ENCODE measurements at regions of chr19 and their contacts with region 1.

Region 1: DNA sequence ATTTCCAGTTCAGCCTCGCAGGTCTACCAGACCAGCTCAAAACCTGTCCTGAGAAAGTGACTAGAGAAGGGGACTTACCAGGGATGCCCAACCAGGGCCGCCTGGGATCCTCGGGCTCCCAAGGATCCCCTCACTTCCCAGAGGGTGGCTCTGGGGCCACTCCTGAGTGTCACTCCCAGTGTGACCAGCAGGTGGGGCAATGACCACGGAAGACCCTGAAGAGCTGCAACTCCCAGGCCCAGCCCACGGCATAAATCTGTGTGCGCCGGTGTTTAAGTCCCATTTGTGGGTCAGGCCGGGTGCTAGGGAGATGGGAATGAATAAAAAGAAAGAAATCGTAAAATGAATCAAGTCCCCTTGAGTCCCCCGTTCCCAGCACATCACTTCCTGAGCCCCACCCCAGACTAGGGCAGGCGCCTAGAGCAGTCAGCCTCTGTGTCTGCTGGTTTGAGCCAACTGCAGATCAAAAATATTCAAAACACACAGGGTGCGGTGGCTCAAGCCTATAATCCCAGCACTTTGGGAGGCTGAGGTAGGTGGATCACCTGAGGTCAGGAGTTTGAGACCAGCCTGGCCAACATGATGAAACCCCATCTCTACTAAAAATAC is 10.7 kb downstream of the PTGIR start:
- DNase-seq: peak; percentile 66 to 88 (median 83)
- ATAC-seq: peak; percentile 71
- H3K4me3 ChIP-seq: peak overlapping the region in 1 of 2 experiments; percentile 20
- H3K4me3 Mint-ChIP-seq: no peak overlapping the region
- H3K27ac ChIP-seq: no peak overlapping the region
- H3K27ac Mint-ChIP-seq: peak overlapping the region; percentile 70
- H3K4me1 ChIP-seq: peaks cover 76% of the 10 kb centered on the region
- H3K4me1 Mint-ChIP-seq: peaks cover 64% of the 10 kb centered on the region
- H3K27me3 ChIP-seq: no peaks in the 10 kb centered on the region
- H3K27me3 Mint-ChIP-seq: no peaks in the 10 kb centered on the region
- CTCF ChIP-seq: peak; percentile 91

Region 2: DNA sequence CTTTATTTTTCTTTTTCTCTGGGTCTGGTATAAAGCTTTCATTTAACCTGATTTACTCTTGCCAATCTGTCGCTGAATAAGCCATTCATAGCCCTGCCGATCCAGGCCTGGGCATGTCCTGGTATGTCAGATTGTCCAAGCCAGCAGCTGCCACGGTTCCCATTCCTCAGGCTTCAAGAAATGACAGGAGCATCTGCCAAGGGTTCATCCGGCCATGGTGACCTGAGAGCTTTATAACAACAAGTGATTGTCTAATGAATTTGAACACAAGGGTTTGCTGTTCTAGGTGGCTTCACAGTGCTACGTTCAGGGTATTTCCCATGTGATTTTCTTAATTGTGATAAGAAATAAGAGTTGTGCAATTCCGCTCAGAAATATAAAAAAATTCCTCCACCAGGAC is 162.9 kb before region 1 on chr19:
- CTCF ChIA-PET with region 1: no interaction called
- POLR2A ChIA-PET with region 1: no interaction called
- intact Hi-C with region 1: no loop called
- DNase-seq: no peak
- ATAC-seq: no peak
- H3K4me3 ChIP-seq: no peak overlapping the region
- H3K4me3 Mint-ChIP-seq: no peak overlapping the region
- H3K27ac ChIP-seq: no peak overlapping the region
- H3K27ac Mint-ChIP-seq: no peak overlapping the region
- H3K4me1 ChIP-seq: no peaks in the 10 kb centered on the region
- H3K4me1 Mint-ChIP-seq: no peaks in the 10 kb centered on the region
- H3K27me3 ChIP-seq: peaks cover 0 to 6% of the 10 kb centered on the region in 2 experiments
- H3K27me3 Mint-ChIP-seq: peaks cover 19% of the 10 kb centered on the region
- CTCF ChIP-seq: no peak

Region 3: DNA sequence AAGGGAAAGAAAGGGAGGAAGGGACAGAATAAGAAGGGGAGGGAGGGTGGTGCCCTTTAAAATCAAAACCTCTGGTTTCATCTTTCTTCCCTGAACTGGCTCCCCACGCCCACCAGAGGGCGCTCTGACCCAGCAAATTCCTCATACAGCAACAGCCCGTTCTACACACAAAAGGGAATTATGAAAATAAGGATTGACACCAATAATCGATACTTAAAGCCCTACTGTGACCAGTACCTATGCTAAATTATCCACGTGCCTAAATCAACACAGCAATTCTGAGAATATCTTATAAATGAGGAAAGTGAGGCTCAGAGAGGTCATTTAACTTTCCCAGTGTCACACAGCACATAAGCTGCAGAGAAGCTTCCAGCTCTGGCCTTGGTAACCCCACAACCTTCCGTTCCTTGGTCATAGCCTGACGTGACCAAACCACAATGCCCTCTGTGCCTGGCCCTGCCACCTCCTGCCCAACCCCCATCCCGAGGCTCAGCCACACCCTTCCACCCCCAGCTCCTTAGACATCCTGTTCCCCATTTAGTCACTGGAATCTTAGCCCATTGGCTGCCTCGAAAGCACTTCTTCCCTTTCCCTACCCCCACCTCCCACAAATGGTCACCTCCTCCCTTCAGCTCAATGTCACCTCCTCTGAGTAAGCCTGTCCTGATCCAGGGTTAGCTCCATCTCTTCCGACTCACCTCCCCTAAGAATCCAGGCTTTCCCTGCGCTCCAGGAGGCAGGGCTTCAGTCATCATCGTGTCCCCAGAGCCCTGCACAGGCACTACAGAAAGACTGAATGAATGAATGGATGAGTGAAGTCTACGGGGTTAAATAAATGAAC is 84.4 kb before region 1 on chr19:
- CTCF ChIA-PET with region 1: interaction called, 6 read pairs
- POLR2A ChIA-PET with region 1: no interaction called
- intact Hi-C with region 1: loop called in 1 of 2 experiments (anchors 1 kb)
- DNase-seq: peak; percentile 57 to 88 (median 74)
- ATAC-seq: peak; percentile 75
- H3K4me3 ChIP-seq: no peak overlapping the region
- H3K4me3 Mint-ChIP-seq: no peak overlapping the region
- H3K27ac ChIP-seq: no peak overlapping the region
- H3K27ac Mint-ChIP-seq: no peak overlapping the region
- H3K4me1 ChIP-seq: peaks cover 4% of the 10 kb centered on the region
- H3K4me1 Mint-ChIP-seq: peaks cover 13% of the 10 kb centered on the region
- H3K27me3 ChIP-seq: peaks cover 0 to 2% of the 10 kb centered on the region in 2 experiments
- H3K27me3 Mint-ChIP-seq: no peaks in the 10 kb centered on the region
- CTCF ChIP-seq: peak; percentile 99

Region 4: GRCh38 chr19:46600384-46601317 is 13.6 kb before region 1 on chr19:
- CTCF ChIA-PET with region 1: interaction called, 54 read pairs
- POLR2A ChIA-PET with region 1: interaction called, 78 read pairs
- intact Hi-C with region 1: loop called in 1 of 2 experiments (anchors 1 kb)
- DNase-seq: peak; percentile 95 to 99 (median 97)
- ATAC-seq: peak; percentile 89
- H3K4me3 ChIP-seq: peak overlapping the region; percentile 88 to 99
- H3K4me3 Mint-ChIP-seq: peak overlapping the region; percentile 96
- H3K27ac ChIP-seq: peak overlapping the region; percentile 100
- H3K27ac Mint-ChIP-seq: peak overlapping the region; percentile 100
- H3K4me1 ChIP-seq: peaks cover 34% of the 10 kb centered on the region
- H3K4me1 Mint-ChIP-seq: peaks cover 38% of the 10 kb centered on the region
- H3K27me3 ChIP-seq: no peaks in the 10 kb centered on the region
- H3K27me3 Mint-ChIP-seq: no peaks in the 10 kb centered on the region
- CTCF ChIP-seq: no peak

Region 5: DNA sequence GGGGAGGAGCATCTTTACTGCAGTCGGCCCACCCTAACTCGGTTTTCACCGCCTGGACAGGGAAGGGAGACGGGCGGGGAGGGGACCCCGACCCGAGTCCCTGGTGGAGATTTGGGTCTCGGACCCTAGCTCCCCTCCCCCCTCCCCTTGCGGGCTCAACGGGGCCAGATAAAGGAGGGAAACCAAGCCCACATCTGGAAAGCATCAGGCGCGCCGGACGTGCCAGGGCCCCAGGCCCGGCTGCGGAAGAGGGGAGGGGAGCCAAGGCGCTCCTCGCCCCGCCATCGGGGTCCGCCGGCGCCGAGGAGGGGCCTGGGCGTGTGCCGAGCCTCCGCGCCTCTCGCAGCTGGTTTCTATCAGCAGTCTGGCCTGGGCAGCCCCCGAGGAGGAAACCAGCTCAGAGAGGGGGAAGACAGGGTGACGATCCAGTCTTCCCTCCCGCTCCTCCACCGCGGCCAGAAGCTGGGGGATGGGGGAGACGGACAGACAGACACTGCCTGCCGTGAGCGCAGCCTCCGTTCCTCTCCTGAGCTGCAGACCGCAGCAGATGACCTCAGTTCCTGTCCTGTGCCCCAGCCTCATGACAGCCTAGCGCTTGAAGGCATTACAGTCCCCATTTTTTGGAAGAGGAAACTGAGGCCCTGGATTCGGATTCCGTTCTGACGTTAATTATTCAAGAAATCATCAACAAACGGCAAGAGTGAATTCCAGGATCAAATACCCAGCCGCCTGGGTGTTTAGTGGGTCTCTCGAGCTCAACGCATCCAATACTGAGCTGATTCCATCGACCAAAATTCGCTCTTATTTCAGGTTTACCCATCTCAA is 25.4 kb after region 1 on chr19:
- CTCF ChIA-PET with region 1: interaction called, 10 read pairs
- POLR2A ChIA-PET with region 1: no interaction called
- intact Hi-C with region 1: loop called (anchors 1 kb)
- DNase-seq: peak in 2 of 9 experiments; percentile 40 to 56
- ATAC-seq: no peak
- H3K4me3 ChIP-seq: peak overlapping the region; percentile 44 to 50
- H3K4me3 Mint-ChIP-seq: peak overlapping the region; percentile 38
- H3K27ac ChIP-seq: no peak overlapping the region
- H3K27ac Mint-ChIP-seq: no peak overlapping the region
- H3K4me1 ChIP-seq: peaks cover 31% of the 10 kb centered on the region
- H3K4me1 Mint-ChIP-seq: peaks cover 12% of the 10 kb centered on the region
- H3K27me3 ChIP-seq: peaks cover 0 to 12% of the 10 kb centered on the region in 2 experiments
- H3K27me3 Mint-ChIP-seq: peaks cover 13% of the 10 kb centered on the region
- CTCF ChIP-seq: no peak

Region 6: DNA sequence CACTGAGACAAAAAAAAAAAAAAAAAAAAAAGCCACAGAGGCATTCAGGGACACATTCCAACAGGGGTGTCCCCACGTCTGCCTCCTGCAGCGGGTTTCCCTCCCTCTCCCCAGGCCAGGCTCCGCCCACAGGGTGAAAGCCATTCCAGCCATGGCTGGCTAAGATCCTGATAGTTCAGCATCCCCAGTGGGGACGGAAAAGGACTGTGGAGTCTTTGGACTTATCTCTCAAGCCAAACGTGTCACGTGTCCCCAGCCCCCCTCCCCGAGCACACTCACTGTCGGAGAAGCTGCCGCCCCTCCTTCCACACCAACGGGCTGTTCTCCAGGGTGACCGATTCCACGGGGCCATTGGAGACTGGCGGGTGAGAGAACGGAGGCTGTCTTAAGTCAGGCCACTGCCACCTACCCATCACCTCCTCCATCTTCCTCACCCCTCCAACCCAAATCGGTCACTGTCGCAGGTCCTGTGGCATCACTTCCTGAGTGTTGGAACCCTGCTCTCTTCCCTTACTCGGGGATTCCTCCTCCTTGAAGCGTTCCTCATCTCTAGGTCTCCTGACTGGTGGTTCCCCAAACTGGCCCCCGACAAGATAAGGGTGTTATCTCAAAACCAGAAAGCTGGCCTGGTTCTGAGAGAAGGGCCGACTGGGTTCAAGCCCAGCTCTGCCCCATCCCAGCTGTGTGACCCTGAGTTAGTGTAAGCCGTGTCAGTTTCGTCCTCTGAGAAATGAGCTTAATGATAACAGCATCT is 122.5 kb after region 1 on chr19:
- CTCF ChIA-PET with region 1: interaction called, 11 read pairs
- POLR2A ChIA-PET with region 1: no interaction called
- intact Hi-C with region 1: no loop called
- DNase-seq: no peak
- ATAC-seq: no peak
- H3K4me3 ChIP-seq: no peak overlapping the region
- H3K4me3 Mint-ChIP-seq: no peak overlapping the region
- H3K27ac ChIP-seq: no peak overlapping the region
- H3K27ac Mint-ChIP-seq: no peak overlapping the region
- H3K4me1 ChIP-seq: peaks cover 1% of the 10 kb centered on the region
- H3K4me1 Mint-ChIP-seq: peaks cover 17% of the 10 kb centered on the region
- H3K27me3 ChIP-seq: no peaks in the 10 kb centered on the region
- H3K27me3 Mint-ChIP-seq: no peaks in the 10 kb centered on the region
- CTCF ChIP-seq: no peak